Psoas muscle (tissue), 8 donors: ENCODE measurements at regions of chr13 and their contacts with region 1.

Region 1: GRCh38 chr13:26698392-26699196 is 62.0 kb downstream of the GPR12 start:
- DNase-seq: peak; percentile 79 to 88
- ATAC-seq: peak; percentile 67 to 92 (median 86)
- H3K4me3 ChIP-seq: no peak overlapping the region
- H3K27ac ChIP-seq: no peak overlapping the region
- H3K4me1 ChIP-seq: no peaks in the 10 kb centered on the region
- H3K27me3 ChIP-seq: no peaks in the 10 kb centered on the region
- CTCF ChIP-seq: peak; percentile 98

Region 2: DNA sequence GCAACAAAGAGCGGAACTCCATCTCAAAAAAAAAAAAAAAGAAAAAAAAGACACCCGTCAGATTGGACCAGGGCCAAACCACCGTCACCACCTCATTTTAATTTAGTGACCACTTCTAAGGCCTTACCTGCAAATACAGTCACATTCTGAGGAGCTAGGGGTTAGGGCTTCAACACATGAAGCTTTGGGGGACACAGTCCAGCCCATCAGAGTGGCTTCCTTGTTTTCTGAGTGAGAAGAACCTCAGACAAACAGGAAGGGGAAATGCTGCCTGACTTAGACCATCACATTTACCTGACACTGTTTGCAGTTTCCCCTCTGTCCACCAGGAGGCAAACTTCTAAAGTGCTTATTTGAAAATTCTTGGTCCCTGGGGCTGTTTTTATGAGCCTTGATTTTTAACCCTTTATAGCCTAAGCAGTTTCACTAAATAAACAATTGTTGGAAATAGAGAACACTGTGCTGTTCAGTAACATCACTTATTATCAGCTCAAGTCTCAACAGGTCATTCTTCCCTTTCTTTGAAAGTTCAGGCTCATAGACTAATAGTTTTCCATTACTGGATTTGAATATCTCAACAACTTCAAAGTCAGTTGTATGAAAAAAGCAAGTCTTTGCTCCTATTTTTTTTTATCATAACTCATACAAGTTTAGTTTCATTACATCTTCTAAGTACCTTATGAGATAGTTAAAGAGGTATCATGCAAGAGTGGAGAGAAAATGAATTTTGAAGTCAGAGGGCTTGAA is 216.0 kb before region 1 on chr13:
- intact Hi-C with region 1: loop called in 1 of 2 experiments (anchors 5 kb)
- DNase-seq: no peak
- ATAC-seq: peak; percentile 17 to 65 (median 50)
- H3K4me3 ChIP-seq: no peak overlapping the region
- H3K27ac ChIP-seq: no peak overlapping the region
- H3K4me1 ChIP-seq: no peaks in the 10 kb centered on the region
- H3K27me3 ChIP-seq: no peaks in the 10 kb centered on the region
- CTCF ChIP-seq: peak; percentile 78

Region 3: GRCh38 chr13:26497968-26498511 is 200.6 kb before region 1 on chr13:
- intact Hi-C with region 1: loop called in 1 of 2 experiments (anchors 5 kb)
- DNase-seq: no peak
- ATAC-seq: no peak
- H3K4me3 ChIP-seq: no peak overlapping the region
- H3K27ac ChIP-seq: no peak overlapping the region
- H3K4me1 ChIP-seq: no peaks in the 10 kb centered on the region
- H3K27me3 ChIP-seq: no peaks in the 10 kb centered on the region
- CTCF ChIP-seq: no peak

Region 4: GRCh38 chr13:27481766-27482165 is 783.2 kb after region 1 on chr13:
- intact Hi-C with region 1: no loop called
- DNase-seq: peak in 1 of 2 donors; percentile 22
- ATAC-seq: no peak
- H3K4me3 ChIP-seq: no peak overlapping the region
- H3K27ac ChIP-seq: no peak overlapping the region
- H3K4me1 ChIP-seq: no peaks in the 10 kb centered on the region
- H3K27me3 ChIP-seq: peaks cover 0 to 3% (median 0%) of the 10 kb centered on the region in 3 donors
- CTCF ChIP-seq: peak; percentile 30